ENCODE measurements at regions of chr1 and their contacts with region 1.

Region 1: DNA sequence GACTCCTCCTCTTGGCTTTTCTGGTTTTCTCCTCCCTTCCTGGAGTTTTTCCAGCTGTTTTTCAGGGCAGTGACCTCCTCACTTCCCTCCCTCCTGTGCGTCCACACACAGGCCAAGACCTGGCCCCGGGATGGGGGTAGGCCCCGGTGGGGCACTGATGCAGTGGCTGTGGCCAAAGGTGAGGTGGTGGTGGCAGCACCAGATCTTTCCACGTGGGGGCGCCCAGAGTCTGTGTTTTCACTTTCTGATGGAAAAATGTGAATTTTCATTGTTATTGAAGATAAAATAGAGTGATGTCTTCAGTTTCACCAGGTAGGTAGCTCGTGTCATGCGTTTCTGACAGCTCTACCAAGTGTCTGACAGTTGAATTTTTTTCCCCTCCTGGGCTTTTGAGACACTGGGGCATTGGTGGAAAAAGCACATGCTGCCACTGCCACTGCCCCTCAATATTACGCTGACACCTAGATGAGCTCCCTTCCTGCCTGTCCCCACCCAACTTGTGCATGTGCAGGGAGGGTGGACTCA is 39.9 kb upstream of the MAGOH start:
- DNase-seq: peak; percentile 78

Region 2: DNA sequence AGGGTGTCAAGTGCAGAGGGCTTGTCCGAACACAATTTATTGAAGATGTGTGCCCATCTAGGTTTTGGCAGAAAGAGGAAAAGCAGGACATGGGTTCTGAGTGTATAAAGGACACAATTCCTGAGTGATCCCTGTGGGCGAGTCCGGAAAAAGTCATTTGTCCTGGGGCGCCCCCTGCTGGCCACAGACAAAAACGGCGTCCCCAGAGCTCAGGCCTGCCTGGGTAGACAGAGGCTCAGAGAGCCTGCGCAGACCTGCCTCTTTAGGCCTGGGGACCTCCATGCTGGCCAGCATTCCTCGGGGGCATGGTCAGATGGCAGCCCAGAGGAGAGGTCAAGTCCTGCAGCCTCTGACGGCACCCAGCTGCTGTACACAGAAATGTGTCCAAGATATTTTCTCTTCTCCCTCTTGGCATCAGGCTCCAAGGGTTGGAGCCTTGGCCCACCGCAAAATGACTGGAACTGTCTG is 115.1 kb after region 1 on chr1:
- CTCF ChIA-PET with region 1: interaction called, 28 read pairs
- POLR2A ChIA-PET with region 1: interaction called, 6 read pairs
- DNase-seq: peak; percentile 87

Region 3: DNA sequence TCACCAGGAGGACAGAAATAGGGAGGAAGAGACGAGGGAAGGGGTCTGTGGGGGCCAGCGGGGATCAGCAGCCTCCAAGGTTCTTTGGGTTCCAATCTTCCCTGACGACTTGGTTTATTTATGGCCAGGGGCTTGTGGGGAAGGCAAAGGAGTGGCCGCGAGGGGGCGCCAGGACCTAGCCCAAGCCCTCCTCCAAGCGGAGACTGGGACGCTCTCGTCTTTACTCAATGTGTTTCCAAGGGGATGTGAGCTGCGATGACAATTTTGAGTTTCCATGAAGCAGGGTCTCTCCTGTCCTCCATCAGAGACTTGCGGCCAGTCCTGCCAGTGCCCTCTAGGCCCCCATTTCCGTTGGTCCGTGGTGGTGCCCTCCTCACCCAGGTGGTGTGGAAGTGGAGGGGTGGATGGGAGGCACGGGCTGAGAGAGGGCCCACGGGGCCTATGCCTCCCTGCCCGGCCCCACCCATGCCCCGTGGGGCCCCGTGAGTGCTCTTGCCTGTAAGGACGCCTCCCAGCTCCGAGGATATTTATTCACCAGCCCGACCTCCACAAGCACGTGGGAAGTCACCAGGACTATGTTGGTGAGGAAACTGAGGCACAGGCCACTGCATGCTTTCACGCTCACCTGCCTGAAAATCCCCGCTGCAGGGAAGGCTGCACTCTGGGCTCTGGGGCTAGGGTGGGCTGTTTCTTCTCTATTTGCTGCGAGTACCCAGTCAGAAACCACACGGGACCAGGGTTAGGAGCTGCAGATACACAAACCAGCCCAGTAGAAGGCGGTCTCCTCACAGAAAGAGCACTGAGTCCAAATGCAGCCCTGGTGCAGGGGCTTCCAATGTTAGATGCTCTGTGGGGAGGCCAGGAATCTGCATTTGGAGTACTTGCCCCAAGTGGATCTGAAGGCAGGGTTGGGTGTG is 207.5 kb after region 1 on chr1:
- CTCF ChIA-PET with region 1: interaction called, 10 read pairs
- POLR2A ChIA-PET with region 1: no interaction called
- DNase-seq: peak; percentile 89